K562 (cell line): ENCODE measurements at regions of chr1 and their contacts with region 1.

Region 1: DNA sequence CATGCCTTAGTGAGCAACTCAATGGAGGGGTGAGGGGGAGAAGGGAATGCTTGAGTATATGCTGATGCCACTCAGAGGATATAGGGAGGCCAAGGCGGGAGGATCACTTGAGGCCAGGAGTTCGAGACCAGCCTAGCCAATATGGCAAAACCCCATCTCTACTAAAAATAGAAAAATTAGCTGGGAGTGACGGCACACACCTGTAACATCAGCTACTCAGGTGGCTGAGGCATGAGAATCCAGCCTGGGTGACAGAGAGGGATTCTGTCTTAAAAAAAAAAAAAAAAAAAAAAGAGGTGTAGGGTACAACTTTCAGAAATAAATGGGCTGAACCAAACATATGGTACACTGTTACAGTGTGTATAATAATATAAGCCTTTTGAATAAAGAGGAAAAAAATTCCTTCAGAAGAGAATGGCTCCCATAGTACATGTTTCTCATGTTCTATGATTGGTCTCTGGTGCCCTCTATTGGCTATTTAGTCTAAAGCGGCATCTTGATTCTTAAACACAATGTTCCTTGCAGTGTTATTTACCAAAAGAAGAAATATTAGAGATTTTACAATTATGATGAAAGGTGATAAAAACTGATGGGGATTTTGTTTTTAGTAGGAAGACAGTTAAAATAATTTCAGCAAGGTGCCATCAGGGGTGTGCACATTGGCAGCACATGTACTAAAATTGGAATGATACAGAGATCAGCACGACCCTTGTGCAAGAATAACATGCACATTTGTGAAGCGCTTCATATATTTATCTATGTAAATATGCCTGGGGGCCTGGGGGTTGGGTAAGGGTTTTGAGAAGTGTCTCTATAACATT is 109.8 kb downstream of the PATJ start:
- DNase-seq: peak; percentile 22 to 73 (median 32)
- ATAC-seq: peak; percentile 85
- H3K4me3 ChIP-seq: no peak overlapping the region
- H3K27ac ChIP-seq: no peak overlapping the region
- H3K4me1 ChIP-seq: no peaks in the 10 kb centered on the region
- H3K27me3 ChIP-seq: peaks cover 0 to 2% of the 10 kb centered on the region in 2 experiments; a peak in 2 of 5 replicates
- CTCF ChIP-seq: peak; percentile 49 to 85 (median 54); a peak in 5 of 6 replicates
- EP300 ChIP-seq: no peak
- POLR2A ChIP-seq: no peak
- RAD21 ChIP-seq: peak; percentile 75 to 86

Region 2: DNA sequence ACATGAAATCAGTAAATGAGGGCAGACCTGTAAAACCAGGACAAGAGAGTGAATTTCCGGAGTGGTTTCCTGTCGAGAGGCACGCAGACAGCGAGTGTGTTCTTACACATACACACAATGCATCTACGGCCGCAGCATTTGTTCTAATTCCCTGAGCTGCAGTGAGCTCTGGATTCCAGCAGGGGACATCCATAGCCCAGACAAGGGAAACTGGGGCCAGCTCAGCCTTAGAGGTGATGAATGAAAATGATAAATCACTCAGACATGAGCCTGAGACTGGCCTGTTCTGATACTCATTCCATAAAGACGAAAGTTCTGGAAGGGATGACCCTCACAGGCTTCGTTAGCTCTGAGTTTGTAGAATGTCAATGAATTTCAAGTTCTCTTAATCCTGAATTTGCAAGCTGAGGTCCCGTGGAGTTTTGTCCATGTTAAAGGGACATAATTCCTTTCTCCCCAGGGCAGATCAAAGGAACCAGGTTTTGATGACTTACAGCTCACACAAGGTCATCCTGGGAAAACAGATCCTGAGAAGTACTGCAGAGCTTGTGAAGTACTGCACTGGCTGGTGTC is 1570.6 kb before region 1 on chr1:
- CTCF ChIA-PET with region 1: no interaction called
- POLR2A ChIA-PET with region 1: no interaction called
- in situ Hi-C with region 1: no loop called
- intact Hi-C with region 1: loop called (anchors 10 kb)
- DNase-seq: peak; percentile 13 to 54 (median 34)
- ATAC-seq: peak; percentile 93
- H3K4me3 ChIP-seq: no peak overlapping the region
- H3K27ac ChIP-seq: no peak overlapping the region
- H3K4me1 ChIP-seq: no peaks in the 10 kb centered on the region
- H3K27me3 ChIP-seq: no peaks in the 10 kb centered on the region
- CTCF ChIP-seq: peak; percentile 61 to 79 (median 77)
- EP300 ChIP-seq: no peak
- POLR2A ChIP-seq: no peak
- RAD21 ChIP-seq: peak; percentile 88 to 90

Region 3: GRCh38 chr1:60969971-60970509 is 882.0 kb before region 1 on chr1:
- CTCF ChIA-PET with region 1: interaction called, 5 read pairs
- POLR2A ChIA-PET with region 1: no interaction called
- in situ Hi-C with region 1: loop called (anchors 10 kb)
- intact Hi-C with region 1: loop called (anchors 2 kb)
- DNase-seq: peak in 2 of 4 experiments; percentile 52 to 55
- ATAC-seq: peak; percentile 83
- H3K4me3 ChIP-seq: no peak overlapping the region
- H3K27ac ChIP-seq: no peak overlapping the region
- H3K4me1 ChIP-seq: peaks cover 3 to 19% of the 10 kb centered on the region in 2 experiments; a peak in 4 of 5 replicates
- H3K27me3 ChIP-seq: no peaks in the 10 kb centered on the region
- CTCF ChIP-seq: peak; percentile 45 to 74 (median 67); a peak in 5 of 6 replicates
- EP300 ChIP-seq: no peak
- POLR2A ChIP-seq: no peak
- RAD21 ChIP-seq: peak; percentile 76 to 89

Region 4: GRCh38 chr1:61301824-61302657 is 550.0 kb before region 1 on chr1:
- CTCF ChIA-PET with region 1: no interaction called
- POLR2A ChIA-PET with region 1: no interaction called
- in situ Hi-C with region 1: no loop called
- intact Hi-C with region 1: no loop called
- DNase-seq: no peak
- ATAC-seq: no peak
- H3K4me3 ChIP-seq: no peak overlapping the region
- H3K27ac ChIP-seq: no peak overlapping the region
- H3K4me1 ChIP-seq: no peaks in the 10 kb centered on the region; a peak in 1 of 5 replicates
- H3K27me3 ChIP-seq: no peaks in the 10 kb centered on the region
- CTCF ChIP-seq: no peak
- EP300 ChIP-seq: no peak
- POLR2A ChIP-seq: no peak
- RAD21 ChIP-seq: no peak

Region 5: GRCh38 chr1:61453111-61453961 is 398.7 kb before region 1 on chr1:
- CTCF ChIA-PET with region 1: no interaction called
- POLR2A ChIA-PET with region 1: no interaction called
- in situ Hi-C with region 1: no loop called
- intact Hi-C with region 1: loop called (anchors 5 kb)
- DNase-seq: peak; percentile 59 to 85 (median 68)
- ATAC-seq: peak; percentile 97
- H3K4me3 ChIP-seq: no peak overlapping the region
- H3K27ac ChIP-seq: no peak overlapping the region
- H3K4me1 ChIP-seq: peaks cover 3 to 7% of the 10 kb centered on the region in 2 experiments; a peak in 3 of 5 replicates
- H3K27me3 ChIP-seq: no peaks in the 10 kb centered on the region
- CTCF ChIP-seq: peak; percentile 74 to 85 (median 83)
- EP300 ChIP-seq: no peak
- POLR2A ChIP-seq: no peak
- RAD21 ChIP-seq: peak; percentile 80 to 82

Region 6: DNA sequence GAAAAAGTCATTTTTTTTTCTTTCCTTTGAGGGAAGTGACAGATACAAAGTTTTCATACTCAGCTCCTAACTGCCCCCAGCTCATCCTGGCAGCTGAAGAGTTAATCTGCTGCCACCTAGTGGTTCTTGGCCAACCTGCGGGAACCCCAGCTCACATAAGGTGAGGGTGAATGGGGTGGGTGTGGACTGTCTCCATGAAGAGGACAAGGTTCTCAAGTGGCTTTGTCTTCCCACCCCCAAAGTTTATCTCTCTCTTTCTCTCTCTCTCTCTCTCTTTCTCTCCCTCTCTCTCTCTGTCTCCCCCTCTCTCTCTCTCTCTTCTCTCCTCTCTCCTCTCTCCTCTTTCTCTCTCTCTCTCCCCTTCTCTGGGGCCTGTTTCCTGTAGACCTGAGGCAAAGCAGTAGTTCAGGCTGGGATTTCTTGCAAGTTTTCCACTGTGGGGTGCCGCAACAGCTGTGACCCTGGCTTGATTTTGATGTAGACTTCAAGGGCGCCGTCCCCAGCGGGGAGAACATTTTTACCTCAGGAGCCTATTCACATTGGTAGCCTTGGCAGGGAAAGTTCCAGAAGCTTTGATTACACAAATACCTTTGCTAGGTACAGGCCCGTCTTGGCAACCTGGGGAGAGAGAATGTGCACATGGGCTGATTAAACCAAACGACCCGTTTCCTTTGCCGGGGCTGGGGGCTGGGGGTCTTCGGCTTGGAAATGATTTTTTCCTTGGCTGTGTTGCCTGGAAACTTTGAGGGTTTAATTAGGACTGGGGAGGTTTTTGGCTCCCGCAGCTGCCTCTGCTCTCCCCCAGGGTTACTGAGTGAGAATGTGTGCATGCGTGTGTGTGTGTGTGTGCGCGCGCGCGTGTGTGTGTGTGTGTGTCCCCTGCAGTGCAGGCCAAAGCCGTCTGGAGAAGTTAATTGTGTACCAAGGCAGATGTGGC is 263.1 kb before region 1 on chr1:
- CTCF ChIA-PET with region 1: no interaction called
- POLR2A ChIA-PET with region 1: no interaction called
- in situ Hi-C with region 1: no loop called
- intact Hi-C with region 1: loop called (anchors 5 kb)
- DNase-seq: peak; percentile 69 to 80 (median 72)
- ATAC-seq: peak; percentile 99
- H3K4me3 ChIP-seq: no peak overlapping the region
- H3K27ac ChIP-seq: no peak overlapping the region
- H3K4me1 ChIP-seq: no peaks in the 10 kb centered on the region
- H3K27me3 ChIP-seq: peaks cover 22 to 35% of the 10 kb centered on the region in 2 experiments
- CTCF ChIP-seq: peak; percentile 84 to 87 (median 85)
- EP300 ChIP-seq: no peak
- POLR2A ChIP-seq: no peak
- RAD21 ChIP-seq: peak; percentile 73 to 89

Region 7: GRCh38 chr1:61606448-61607312 is 245.4 kb before region 1 on chr1:
- CTCF ChIA-PET with region 1: no interaction called
- POLR2A ChIA-PET with region 1: no interaction called
- in situ Hi-C with region 1: no loop called
- intact Hi-C with region 1: no loop called
- DNase-seq: no peak
- ATAC-seq: no peak
- H3K4me3 ChIP-seq: no peak overlapping the region
- H3K27ac ChIP-seq: no peak overlapping the region
- H3K4me1 ChIP-seq: no peaks in the 10 kb centered on the region
- H3K27me3 ChIP-seq: peaks cover 9 to 14% of the 10 kb centered on the region in 2 experiments; a peak in 2 of 5 replicates
- CTCF ChIP-seq: no peak
- EP300 ChIP-seq: no peak
- POLR2A ChIP-seq: no peak
- RAD21 ChIP-seq: no peak